CD4-positive, alpha-beta T cell (primary cell): ENCODE measurements at regions of chr1 and their contacts with region 1.

Region 1: GRCh38 chr1:156445789-156446263 is 54.7 kb downstream of the MEF2D start:
- DNase-seq: peak; percentile 61 to 88 (median 72)
- ATAC-seq: peak; percentile 95
- H3K4me3 ChIP-seq: no peak overlapping the region
- H3K4me3 Mint-ChIP-seq: no peak overlapping the region
- H3K27ac ChIP-seq: no peak overlapping the region
- H3K27ac Mint-ChIP-seq: no peak overlapping the region
- H3K4me1 ChIP-seq: peaks cover 7% of the 10 kb centered on the region
- H3K4me1 Mint-ChIP-seq: peaks cover 9% of the 10 kb centered on the region
- H3K27me3 ChIP-seq: peaks cover 41 to 43% of the 10 kb centered on the region in 2 experiments
- H3K27me3 Mint-ChIP-seq: peaks cover 53% of the 10 kb centered on the region
- CTCF ChIP-seq: peak; percentile 90

Region 2: DNA sequence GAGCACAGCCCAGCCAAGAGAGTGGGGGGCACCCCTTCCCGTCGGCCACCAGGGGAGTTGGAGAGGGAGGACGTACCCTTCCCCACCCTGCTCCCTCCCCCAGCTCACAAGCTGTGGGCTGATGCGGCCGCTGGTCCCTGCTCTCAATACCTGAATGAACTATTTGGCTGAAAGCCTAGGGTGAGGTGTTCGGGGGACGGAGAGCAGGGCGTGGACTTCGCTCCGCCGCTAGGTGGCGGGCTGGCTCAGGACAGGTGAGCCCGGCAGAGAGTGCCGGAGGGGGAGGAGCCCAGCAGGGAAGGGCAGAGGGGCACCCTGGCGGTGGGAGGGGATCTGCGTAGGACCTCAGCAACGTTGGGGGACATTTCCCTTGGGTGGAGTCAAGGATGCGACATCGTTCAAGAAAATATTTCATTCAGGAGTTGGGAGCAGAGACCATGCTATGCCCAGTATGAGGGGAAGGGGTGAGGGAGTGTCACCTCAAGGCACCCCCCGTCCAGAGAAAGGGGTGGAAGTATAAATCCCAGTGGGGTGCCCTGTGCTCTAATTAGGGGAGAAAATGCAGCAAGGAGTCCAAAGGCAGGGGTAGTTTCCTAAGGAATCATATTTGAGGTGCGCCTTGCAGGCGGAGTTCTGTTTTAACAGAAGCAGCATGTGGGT is 88.8 kb before region 1 on chr1:
- CTCF ChIA-PET with region 1: interaction called, 3 read pairs
- POLR2A ChIA-PET with region 1: no interaction called
- intact Hi-C with region 1: loop called in 1 of 2 experiments (anchors 1 kb)
- DNase-seq: peak; percentile 28 to 83 (median 62)
- ATAC-seq: peak; percentile 100
- H3K4me3 ChIP-seq: no peak overlapping the region
- H3K4me3 Mint-ChIP-seq: no peak overlapping the region
- H3K27ac ChIP-seq: no peak overlapping the region
- H3K27ac Mint-ChIP-seq: no peak overlapping the region
- H3K4me1 ChIP-seq: peaks cover 9% of the 10 kb centered on the region
- H3K4me1 Mint-ChIP-seq: peaks cover 5% of the 10 kb centered on the region
- H3K27me3 ChIP-seq: peaks cover 13 to 14% of the 10 kb centered on the region in 2 experiments
- H3K27me3 Mint-ChIP-seq: peaks cover 21% of the 10 kb centered on the region
- CTCF ChIP-seq: peak; percentile 100

Region 3: GRCh38 chr1:156421062-156421938 is 24.5 kb before region 1 on chr1:
- CTCF ChIA-PET with region 1: interaction called, 12 read pairs
- POLR2A ChIA-PET with region 1: interaction called, 4 read pairs
- intact Hi-C with region 1: no loop called
- DNase-seq: peak; percentile 20 to 83 (median 47)
- ATAC-seq: peak; percentile 65
- H3K4me3 ChIP-seq: peak overlapping the region; percentile 65
- H3K4me3 Mint-ChIP-seq: peak overlapping the region; percentile 91
- H3K27ac ChIP-seq: no peak overlapping the region
- H3K27ac Mint-ChIP-seq: no peak overlapping the region
- H3K4me1 ChIP-seq: peaks cover 30% of the 10 kb centered on the region
- H3K4me1 Mint-ChIP-seq: peaks cover 26% of the 10 kb centered on the region
- H3K27me3 ChIP-seq: peaks cover 49 to 76% of the 10 kb centered on the region in 2 experiments
- H3K27me3 Mint-ChIP-seq: peaks cover 95% of the 10 kb centered on the region
- CTCF ChIP-seq: no peak